ENCODE measurements at regions of chr21 and their contacts with region 1.

Region 1: GRCh38 chr21:42973991-42974831 is at the start of gene PKNOX1:
- DNase-seq: peak; percentile 95 to 99
- H3K4me3 ChIP-seq: peak within 1 kb of the TSS; percentile 86 to 93
- H3K27ac ChIP-seq: peak within 1 kb of the TSS; percentile 96
- H3K4me1 ChIP-seq: peaks cover 0 to 6% of the 10 kb centered on the region in 2 donors
- H3K27me3 ChIP-seq: no peaks in the 10 kb centered on the region
- CTCF ChIP-seq: peak in 1 of 3 experiments; percentile 43
- total RNA-seq, gene PKNOX1: 11.2 TPM

Region 2: GRCh38 chr21:42496122-42496900 is 477.9 kb before region 1 on chr21 and contains the start of gene RSPH1:
- intact Hi-C with region 1: loop called (anchors 5 kb)
- DNase-seq: peak; percentile 98 to 100
- H3K4me3 ChIP-seq: peak within 1 kb of the TSS; percentile 76 to 77
- H3K27ac ChIP-seq: peak within 1 kb of the TSS; percentile 64 to 76
- H3K4me1 ChIP-seq: no peaks in the 10 kb centered on the region
- H3K27me3 ChIP-seq: no peaks in the 10 kb centered on the region
- CTCF ChIP-seq: no peak
- total RNA-seq, gene RSPH1: not detected

Region 3: GRCh38 chr21:42892931-42893755 is 81.1 kb before region 1 on chr21 and contains the start of gene NDUFV3:
- intact Hi-C with region 1: loop called (anchors 1 kb)
- DNase-seq: peak; percentile 99 to 100
- H3K4me3 ChIP-seq: peak within 1 kb of the TSS; percentile 87 to 91
- H3K27ac ChIP-seq: peak within 1 kb of the TSS; percentile 90 to 97
- H3K4me1 ChIP-seq: peaks cover 0 to 3% of the 10 kb centered on the region in 2 donors
- H3K27me3 ChIP-seq: no peaks in the 10 kb centered on the region
- CTCF ChIP-seq: no peak
- total RNA-seq, gene NDUFV3: 60.7 TPM

Region 4: DNA sequence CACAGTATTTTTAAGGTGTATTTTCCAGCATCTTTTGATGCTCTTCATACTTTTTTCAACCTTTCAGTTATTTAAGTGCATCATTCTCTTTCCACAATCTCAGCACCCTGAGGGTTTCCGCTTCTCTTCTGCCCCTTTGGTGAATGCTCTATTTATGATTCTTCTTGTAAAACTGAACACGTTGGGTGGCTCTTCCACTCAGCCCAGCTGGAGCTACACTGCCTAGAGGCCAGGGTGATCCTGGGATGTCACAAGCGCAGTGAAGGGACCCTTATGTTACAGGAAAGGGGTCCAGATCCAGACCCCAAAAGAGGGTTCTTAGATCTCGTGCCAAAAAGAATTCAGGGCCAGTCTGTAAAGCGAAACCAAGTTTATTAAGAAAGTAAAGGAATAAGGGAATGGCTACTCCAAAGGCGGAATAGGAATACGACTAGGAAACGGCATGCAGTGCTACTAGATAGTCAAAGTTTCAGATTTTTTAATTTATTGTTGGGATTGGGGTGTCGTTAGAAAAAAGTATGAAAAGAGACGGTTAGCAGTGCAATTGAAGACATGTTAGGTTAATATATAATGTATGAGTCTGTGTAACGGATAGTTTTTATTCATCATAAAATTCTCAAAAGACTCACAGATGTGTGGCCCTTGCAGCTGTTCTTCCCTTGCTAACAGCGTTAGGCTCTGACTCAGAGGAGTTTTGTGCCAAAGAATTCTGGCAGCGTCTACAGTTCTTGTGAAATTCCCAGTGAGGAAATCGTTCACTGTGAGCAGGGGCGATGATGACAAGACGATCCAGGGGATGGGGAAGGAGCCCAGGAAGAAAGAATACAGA is 34.4 kb before region 1 on chr21:
- intact Hi-C with region 1: loop called (anchors 5 kb)
- DNase-seq: peak; percentile 34 to 95
- H3K4me3 ChIP-seq: peak overlapping the region in 1 of 2 donors; percentile 22
- H3K27ac ChIP-seq: peak overlapping the region; percentile 39 to 50
- H3K4me1 ChIP-seq: peaks cover 2% of the 10 kb centered on the region in 2 donors
- H3K27me3 ChIP-seq: no peaks in the 10 kb centered on the region
- CTCF ChIP-seq: no peak

Region 5: GRCh38 chr21:44338971-44339910 is 1365.0 kb after region 1 on chr21 and contains the start of gene CFAP410:
- intact Hi-C with region 1: loop called (anchors 2 kb)
- DNase-seq: peak; percentile 74 to 97
- H3K4me3 ChIP-seq: peak within 1 kb of the TSS; percentile 69 to 92
- H3K27ac ChIP-seq: peak within 1 kb of the TSS; percentile 92 to 99
- H3K4me1 ChIP-seq: peaks cover 4 to 12% of the 10 kb centered on the region in 2 donors
- H3K27me3 ChIP-seq: no peaks in the 10 kb centered on the region
- CTCF ChIP-seq: no peak
- total RNA-seq, gene CFAP410: 68.5 TPM

Measured in ascending aorta (tissue), 2 donors.